ENCODE measurements at regions of chr3 and their contacts with region 1.

Region 1: DNA sequence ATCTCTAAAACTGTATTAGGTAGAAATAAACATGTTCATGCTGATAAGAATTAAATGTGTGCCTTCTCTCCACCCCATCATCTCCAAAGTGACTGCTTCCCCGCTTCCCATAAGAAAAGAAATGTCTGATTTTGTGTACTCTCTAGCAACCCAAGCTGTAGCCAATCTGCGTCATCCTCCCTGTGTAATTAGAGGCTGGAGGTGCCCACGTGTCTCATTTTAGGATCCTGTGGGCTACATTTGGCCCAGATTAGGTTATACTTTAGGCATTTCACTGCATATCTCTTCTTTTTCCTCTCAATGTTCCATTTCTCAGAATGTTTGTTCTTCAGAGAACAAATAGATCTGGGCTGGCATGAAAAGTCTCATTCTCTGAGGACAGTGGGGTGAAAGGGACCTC is 19.3 kb upstream of the ZNF148 start:
- DNase-seq: no peak
- ATAC-seq: no peak
- H3K4me3 ChIP-seq: no peak overlapping the region
- H3K27ac ChIP-seq: no peak overlapping the region
- H3K4me1 ChIP-seq: no peaks in the 10 kb centered on the region
- H3K27me3 ChIP-seq: 0 out of 2 replicates have a peak, but pooled peaks cover 3% of the 10 kb centered on the region
- CTCF ChIP-seq: no peak

Region 2: GRCh38 chr3:125024817-125025216 is 369.6 kb before region 1 on chr3:
- CTCF ChIA-PET with region 1: no interaction called
- POLR2A ChIA-PET with region 1: no interaction called
- intact Hi-C with region 1: no loop called
- DNase-seq: no peak
- ATAC-seq: no peak
- H3K4me3 ChIP-seq: no peak overlapping the region
- H3K27ac ChIP-seq: no peak overlapping the region
- H3K4me1 ChIP-seq: no peaks in the 10 kb centered on the region
- H3K27me3 ChIP-seq: no peaks in the 10 kb centered on the region
- CTCF ChIP-seq: no peak

Region 3: GRCh38 chr3:125280668-125281361 is 113.6 kb before region 1 on chr3:
- CTCF ChIA-PET with region 1: interaction called, 11 read pairs
- POLR2A ChIA-PET with region 1: interaction called, 4 read pairs
- intact Hi-C with region 1: no loop called
- DNase-seq: no peak
- ATAC-seq: no peak
- H3K4me3 ChIP-seq: no peak overlapping the region
- H3K27ac ChIP-seq: no peak overlapping the region
- H3K4me1 ChIP-seq: no peaks in the 10 kb centered on the region
- H3K27me3 ChIP-seq: no peaks in the 10 kb centered on the region
- CTCF ChIP-seq: no peak

Measured in PC-3 (cell line).